ENCODE measurements at regions of chr9 and their contacts with region 1.

Region 1: GRCh38 chr9:19999491-20000057 is 210.7 kb upstream of the SLC24A2 start:
- DNase-seq: peak; percentile 81
- ATAC-seq: peak; percentile 94
- H3K4me3 Mint-ChIP-seq: peak overlapping the region; percentile 42
- H3K27ac Mint-ChIP-seq: peak overlapping the region; percentile 97
- H3K4me1 Mint-ChIP-seq: peaks cover 46% of the 10 kb centered on the region
- H3K27me3 Mint-ChIP-seq: no peaks in the 10 kb centered on the region

Region 2: DNA sequence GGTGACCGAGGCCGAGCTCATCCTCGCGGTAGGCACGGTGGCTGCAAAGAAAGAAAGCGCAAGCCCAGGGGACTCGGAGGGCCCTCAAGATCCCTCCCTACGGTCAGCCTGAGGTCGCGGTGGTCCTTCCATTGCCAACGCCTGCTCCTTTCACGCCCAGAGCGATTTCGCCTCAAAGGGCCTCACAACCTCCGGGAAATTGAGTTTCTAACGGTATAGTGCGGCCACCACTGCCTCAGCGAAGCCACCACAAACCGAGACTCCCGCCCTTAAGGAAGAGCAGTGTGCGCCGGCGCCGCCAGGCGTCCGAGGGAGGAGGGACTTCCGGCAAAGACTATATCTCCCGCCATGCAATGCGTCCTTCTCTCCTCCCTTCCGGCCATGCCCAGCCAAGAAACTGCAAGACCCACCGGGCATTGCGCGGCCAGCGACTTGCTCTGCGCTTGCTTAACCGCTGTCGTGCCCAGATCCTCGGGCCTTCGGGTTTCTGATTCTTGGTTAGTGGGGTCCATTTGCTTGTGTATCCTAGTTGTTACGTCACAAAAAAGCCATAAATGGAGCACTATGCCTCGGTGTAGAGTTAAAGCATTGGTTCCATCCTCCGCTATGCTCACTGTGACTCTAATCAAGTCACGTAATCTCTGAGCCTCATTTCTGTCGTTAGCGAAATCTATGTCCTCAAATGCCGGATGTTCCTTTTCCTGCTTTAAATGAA is 896.8 kb before region 1 on chr9 and contains the start of gene HAUS6:
- CTCF ChIA-PET with region 1: no interaction called
- POLR2A ChIA-PET with region 1: no interaction called
- intact Hi-C with region 1: loop called in 1 of 2 experiments (anchors 2 kb)
- DNase-seq: peak; percentile 98
- ATAC-seq: peak; percentile 98
- H3K4me3 Mint-ChIP-seq: peak within 1 kb of the TSS; percentile 96
- H3K27ac Mint-ChIP-seq: peak within 1 kb of the TSS; percentile 96
- H3K4me1 Mint-ChIP-seq: peaks cover 25% of the 10 kb centered on the region
- H3K27me3 Mint-ChIP-seq: no peaks in the 10 kb centered on the region
- total RNA-seq, gene HAUS6: 29.3 to 32.5 TPM

Region 3: GRCh38 chr9:19976226-19976625 is 23.3 kb before region 1 on chr9:
- CTCF ChIA-PET with region 1: interaction called, 3 read pairs
- POLR2A ChIA-PET with region 1: no interaction called
- intact Hi-C with region 1: loop called (anchors 1 kb)
- DNase-seq: peak; percentile 49
- ATAC-seq: peak; percentile 96
- H3K4me3 Mint-ChIP-seq: no peak overlapping the region
- H3K27ac Mint-ChIP-seq: peak overlapping the region; percentile 88
- H3K4me1 Mint-ChIP-seq: peaks cover 25% of the 10 kb centered on the region
- H3K27me3 Mint-ChIP-seq: peaks cover 2% of the 10 kb centered on the region

Region 4: GRCh38 chr9:20209391-20210340 is 210.1 kb after region 1 on chr9:
- CTCF ChIA-PET with region 1: interaction called, 3 read pairs
- POLR2A ChIA-PET with region 1: interaction called, 3 read pairs
- intact Hi-C with region 1: loop called (anchors 1 kb)
- DNase-seq: peak; percentile 77
- ATAC-seq: peak; percentile 79
- H3K4me3 Mint-ChIP-seq: peak overlapping the region; percentile 31
- H3K27ac Mint-ChIP-seq: peak overlapping the region; percentile 84
- H3K4me1 Mint-ChIP-seq: peaks cover 25% of the 10 kb centered on the region
- H3K27me3 Mint-ChIP-seq: no peaks in the 10 kb centered on the region

Region 5: DNA sequence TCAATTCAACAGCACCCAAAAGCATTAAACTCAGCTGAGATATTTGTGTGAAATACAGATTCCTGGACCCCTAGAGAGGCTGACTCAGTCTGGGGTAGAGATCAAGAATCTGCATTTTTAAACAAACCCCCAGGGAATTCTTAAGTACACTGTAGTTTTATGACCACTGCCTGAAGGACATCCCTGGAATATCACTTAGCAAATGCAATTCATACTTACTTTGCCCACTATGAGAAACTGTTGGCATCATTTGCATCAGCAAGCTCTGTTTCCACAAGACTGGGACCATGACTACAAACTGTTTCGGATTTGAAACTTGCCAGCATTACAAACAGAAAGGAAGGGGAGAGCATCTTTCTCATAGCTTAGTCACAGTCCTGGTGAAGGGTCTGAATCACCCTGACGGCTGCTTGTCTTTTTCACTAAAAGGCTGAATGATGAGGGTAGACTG is 559.0 kb after region 1 on chr9:
- CTCF ChIA-PET with region 1: no interaction called
- POLR2A ChIA-PET with region 1: no interaction called
- intact Hi-C with region 1: loop called (anchors 2 to 10 kb)
- DNase-seq: peak; percentile 61
- ATAC-seq: peak; percentile 92
- H3K4me3 Mint-ChIP-seq: no peak overlapping the region
- H3K27ac Mint-ChIP-seq: peak overlapping the region; percentile 86
- H3K4me1 Mint-ChIP-seq: peaks cover 85% of the 10 kb centered on the region
- H3K27me3 Mint-ChIP-seq: no peaks in the 10 kb centered on the region

Region 6: GRCh38 chr9:21031091-21031807 is 1031.7 kb after region 1 on chr9 and contains the start of gene HACD4:
- CTCF ChIA-PET with region 1: no interaction called
- POLR2A ChIA-PET with region 1: no interaction called
- intact Hi-C with region 1: loop called in 1 of 2 experiments (anchors 1 kb)
- DNase-seq: peak; percentile 79
- ATAC-seq: peak; percentile 79
- H3K4me3 Mint-ChIP-seq: peak within 1 kb of the TSS; percentile 53
- H3K27ac Mint-ChIP-seq: peak within 1 kb of the TSS; percentile 71
- H3K4me1 Mint-ChIP-seq: peaks cover 26% of the 10 kb centered on the region
- H3K27me3 Mint-ChIP-seq: no peaks in the 10 kb centered on the region
- total RNA-seq, gene HACD4: 2.7 to 3.0 TPM